ENCODE measurements at regions of chr3 and their contacts with region 1.

Region 1: DNA sequence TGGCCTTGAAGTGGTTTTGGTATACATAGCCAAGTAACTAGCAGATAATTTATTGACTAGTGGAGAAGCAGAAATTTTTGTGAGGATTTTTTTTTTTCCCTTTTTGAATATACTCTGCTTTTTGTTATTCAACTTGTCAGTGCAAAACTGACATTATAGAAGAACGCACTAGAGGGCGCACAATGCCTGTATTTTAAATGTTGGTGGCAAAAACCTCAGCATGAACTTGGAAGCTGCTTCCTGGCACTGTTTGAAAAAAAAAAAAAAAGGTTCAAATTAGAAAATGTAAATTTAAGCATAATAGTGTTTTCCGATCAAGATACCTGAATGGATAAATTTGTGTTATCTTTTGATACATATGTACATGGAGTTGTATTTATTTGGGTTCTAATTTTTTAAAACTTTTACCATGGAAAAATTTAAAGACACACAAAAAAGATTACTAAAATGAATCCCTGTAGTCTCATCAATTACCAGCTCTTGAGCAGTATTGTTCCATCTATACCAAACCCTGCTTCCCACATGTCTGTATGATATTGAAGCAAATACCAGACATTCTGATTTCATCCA is 56.0 kb downstream of the SLC25A26 start:
- DNase-seq: peak in 5 of 10 donors; percentile 31 to 79 (median 60)
- H3K4me3 ChIP-seq: no peak overlapping the region
- H3K27ac ChIP-seq: peak overlapping the region in 2 of 59 donors; percentile 16
- H3K27me3 ChIP-seq: no peaks in the 10 kb centered on the region
- CTCF ChIP-seq: peak; percentile 67 to 93 (median 82)

Region 2: DNA sequence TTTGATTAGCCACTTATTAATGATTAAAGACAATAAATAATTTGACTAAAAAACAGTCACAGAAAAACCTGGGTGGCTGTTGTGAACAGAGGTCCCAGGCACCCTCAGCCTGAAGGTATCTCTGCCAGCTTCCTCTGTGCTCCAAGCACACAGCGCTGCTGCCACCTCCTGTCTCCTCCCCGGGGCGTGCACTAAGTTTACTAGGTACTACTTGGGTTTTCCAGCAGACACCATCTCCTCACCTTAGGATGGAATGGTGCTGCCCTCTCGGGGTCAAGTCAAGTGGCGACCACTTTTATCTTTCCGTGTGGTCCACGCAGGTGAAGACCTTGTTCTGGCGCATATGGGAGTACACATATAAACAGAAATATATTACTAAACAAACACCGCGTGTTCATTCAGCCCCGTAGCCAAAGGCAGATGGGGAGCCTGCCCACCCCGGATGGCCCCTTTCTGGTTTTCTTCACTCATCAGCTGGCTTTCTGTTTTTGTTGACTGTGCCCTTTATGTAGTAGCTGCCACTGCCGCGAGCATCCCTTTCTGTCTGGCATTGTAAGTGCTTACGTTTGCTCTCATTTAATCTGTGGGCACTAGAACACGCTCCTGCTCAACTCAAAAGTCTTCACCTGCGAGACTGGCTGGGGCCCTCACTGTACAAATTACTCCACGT is 96.0 kb after region 1 on chr3:
- intact Hi-C with region 1: loop called (anchors 2 kb)
- DNase-seq: peak in 4 of 10 donors; percentile 53 to 71 (median 66)
- H3K4me3 ChIP-seq: peak overlapping the region in 4 of 59 donors; percentile 3 to 19 (median 8)
- H3K27ac ChIP-seq: peak overlapping the region in 8 of 59 donors; percentile 8 to 58 (median 36)
- H3K27me3 ChIP-seq: no peaks in the 10 kb centered on the region
- CTCF ChIP-seq: peak in 54 of 56 donors; percentile 13 to 75 (median 46)

Region 3: DNA sequence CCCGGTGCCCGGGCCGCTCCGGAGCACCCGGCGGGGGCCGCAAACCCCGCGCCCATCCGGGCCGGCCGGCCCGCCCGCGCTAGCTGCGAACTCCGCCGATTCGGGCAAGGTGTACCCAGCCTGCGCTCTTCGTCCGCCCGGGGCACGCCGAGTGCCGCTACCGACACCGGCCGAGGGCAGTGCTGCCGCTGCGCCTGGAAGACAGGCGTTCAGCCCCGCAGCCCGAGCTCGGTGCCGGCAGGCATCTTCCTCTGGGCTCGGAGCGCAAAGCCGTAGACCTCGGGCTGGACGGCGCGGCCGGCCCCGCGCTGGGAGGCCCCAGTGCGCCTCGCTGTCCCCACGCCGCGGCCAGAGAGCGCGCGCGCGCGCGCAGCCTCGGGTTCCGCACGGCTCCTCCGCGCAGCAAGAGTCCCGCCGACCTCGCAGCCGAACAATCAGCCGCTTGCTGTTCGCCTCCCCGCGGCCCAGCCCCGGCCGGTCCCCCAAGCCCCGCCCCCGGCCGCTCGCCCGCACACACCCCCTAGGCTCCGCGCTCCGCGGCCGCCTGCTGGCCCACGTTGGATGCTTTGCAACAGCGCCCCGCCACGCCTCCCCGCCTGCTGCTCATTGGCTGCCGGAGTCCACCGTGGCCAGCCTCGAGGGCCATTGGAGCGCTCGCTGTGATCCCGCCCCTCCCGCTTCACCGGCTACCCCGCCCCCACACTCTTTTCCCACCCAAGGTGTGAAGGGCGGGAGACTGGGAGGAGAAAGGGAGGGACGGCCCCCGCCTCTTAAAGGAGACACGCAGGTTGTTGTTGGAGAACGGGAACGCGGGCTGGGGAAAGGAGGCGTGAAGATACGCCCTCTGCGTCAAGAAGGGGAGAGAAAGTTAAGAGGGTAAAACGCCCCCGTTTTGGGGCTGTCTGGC is 224.0 kb after region 1 on chr3 and contains the start of gene LRIG1:
- intact Hi-C with region 1: no loop called
- DNase-seq: peak; percentile 98 to 100 (median 99)
- H3K4me3 ChIP-seq: peak within 1 kb of the TSS; percentile 65 to 98 (median 88)
- H3K27ac ChIP-seq: peak within 1 kb of the TSS; percentile 32 to 98 (median 92)
- H3K27me3 ChIP-seq: no peaks in the 10 kb centered on the region
- CTCF ChIP-seq: peak in 51 of 56 donors; percentile 13 to 76 (median 52)
- total RNA-seq, gene LRIG1: 65.6 to 291 (median 118) TPM

Region 4: GRCh38 chr3:66816090-66816761 is 539.4 kb after region 1 on chr3:
- intact Hi-C with region 1: loop called (anchors 5 kb)
- DNase-seq: no peak
- H3K4me3 ChIP-seq: no peak overlapping the region
- H3K27ac ChIP-seq: no peak overlapping the region
- H3K27me3 ChIP-seq: no peaks in the 10 kb centered on the region
- CTCF ChIP-seq: peak; percentile 51 to 90 (median 76)